CD8-positive, alpha-beta memory T cell (primary cell): ENCODE measurements at regions of chr22 and their contacts with region 1.

Region 1: GRCh38 chr22:37538590-37539357 is 19.6 kb upstream of the CARD10 start:
- DNase-seq: peak; percentile 82 to 89 (median 83)
- H3K4me3 ChIP-seq: no peak overlapping the region
- H3K4me3 Mint-ChIP-seq: peak overlapping the region in 5 of 7 donors; percentile 56 to 75 (median 65)
- H3K27ac ChIP-seq: no peak overlapping the region
- H3K27ac Mint-ChIP-seq: peak overlapping the region in 2 of 8 donors; percentile 45 to 87
- H3K4me1 ChIP-seq: peaks cover 12% of the 10 kb centered on the region
- H3K4me1 Mint-ChIP-seq: peaks cover 28 to 39% (median 33%) of the 10 kb centered on the region in 3 donors
- H3K27me3 ChIP-seq: no peaks in the 10 kb centered on the region
- H3K27me3 Mint-ChIP-seq: peaks cover 18 to 42% of the 10 kb centered on the region in 2 donors

Region 2: GRCh38 chr22:37552524-37553163 is 13.9 kb after region 1 on chr22:
- CTCF ChIA-PET with region 1: interaction called, 22 read pairs
- POLR2A ChIA-PET with region 1: interaction called, 3 read pairs
- DNase-seq: no peak
- H3K4me3 ChIP-seq: no peak overlapping the region
- H3K4me3 Mint-ChIP-seq: no peak overlapping the region
- H3K27ac ChIP-seq: no peak overlapping the region
- H3K27ac Mint-ChIP-seq: peak overlapping the region in 1 of 8 donors; percentile 62
- H3K4me1 ChIP-seq: no peaks in the 10 kb centered on the region
- H3K4me1 Mint-ChIP-seq: peaks cover 0 to 3% (median 0%) of the 10 kb centered on the region in 3 donors
- H3K27me3 ChIP-seq: no peaks in the 10 kb centered on the region
- H3K27me3 Mint-ChIP-seq: peaks cover 18 to 44% of the 10 kb centered on the region in 2 donors

Region 3: GRCh38 chr22:37588546-37589215 is 49.9 kb after region 1 on chr22:
- CTCF ChIA-PET with region 1: interaction called, 51 read pairs
- POLR2A ChIA-PET with region 1: no interaction called
- DNase-seq: no peak
- H3K4me3 ChIP-seq: no peak overlapping the region
- H3K4me3 Mint-ChIP-seq: no peak overlapping the region
- H3K27ac ChIP-seq: no peak overlapping the region
- H3K27ac Mint-ChIP-seq: no peak overlapping the region
- H3K4me1 ChIP-seq: peaks cover 6% of the 10 kb centered on the region
- H3K4me1 Mint-ChIP-seq: peaks cover 11 to 14% (median 13%) of the 10 kb centered on the region in 3 donors
- H3K27me3 ChIP-seq: no peaks in the 10 kb centered on the region
- H3K27me3 Mint-ChIP-seq: peaks cover 8 to 24% of the 10 kb centered on the region in 2 donors

Region 4: DNA sequence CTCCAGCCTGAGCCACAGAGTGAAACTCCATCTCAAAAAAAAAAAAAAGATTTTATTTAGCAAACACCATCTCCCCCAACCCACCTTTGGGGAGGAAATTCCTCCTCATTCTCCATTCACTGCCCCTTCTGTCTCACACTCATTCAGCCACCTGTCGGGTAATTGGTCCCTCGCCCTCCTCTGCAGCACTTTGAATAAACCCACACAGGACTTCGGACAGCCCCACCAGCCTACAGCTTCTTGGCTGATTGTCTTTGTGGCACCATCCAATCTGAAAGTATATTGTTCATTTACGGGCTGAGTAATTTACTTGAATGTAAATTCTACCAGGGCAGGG is 62.4 kb after region 1 on chr22:
- CTCF ChIA-PET with region 1: no interaction called
- POLR2A ChIA-PET with region 1: no interaction called
- DNase-seq: no peak
- H3K4me3 ChIP-seq: no peak overlapping the region
- H3K4me3 Mint-ChIP-seq: no peak overlapping the region
- H3K27ac ChIP-seq: no peak overlapping the region
- H3K27ac Mint-ChIP-seq: no peak overlapping the region
- H3K4me1 ChIP-seq: peaks cover 25% of the 10 kb centered on the region
- H3K4me1 Mint-ChIP-seq: peaks cover 20 to 32% (median 22%) of the 10 kb centered on the region in 3 donors
- H3K27me3 ChIP-seq: no peaks in the 10 kb centered on the region
- H3K27me3 Mint-ChIP-seq: peaks cover 3 to 7% of the 10 kb centered on the region in 2 donors